ENCODE measurements at regions of chr1 and their contacts with region 1.

Region 1: GRCh38 chr1:185170291-185170848 is 13.4 kb downstream of the SWT1 start:
- DNase-seq: peak; percentile 77
- H3K4me3 ChIP-seq: no peak overlapping the region
- H3K27ac ChIP-seq: no peak overlapping the region
- H3K4me1 ChIP-seq: no peaks in the 10 kb centered on the region
- CTCF ChIP-seq: peak; percentile 100

Region 2: GRCh38 chr1:184982002-184982954 is 188.1 kb before region 1 on chr1:
- CTCF ChIA-PET with region 1: no interaction called
- POLR2A ChIA-PET with region 1: no interaction called
- intact Hi-C with region 1: loop called (anchors 5 kb)
- DNase-seq: peak; percentile 59
- H3K4me3 ChIP-seq: no peak overlapping the region
- H3K27ac ChIP-seq: no peak overlapping the region
- H3K4me1 ChIP-seq: no peaks in the 10 kb centered on the region
- CTCF ChIP-seq: peak; percentile 94

Measured in OCI-LY7 (cell line).